OCI-LY7 (cell line): ENCODE measurements at regions of chr6 and their contacts with region 1.

Region 1: GRCh38 chr6:142827369-142827768 is 117.6 kb downstream of the HIVEP2 start:
- DNase-seq: no peak
- H3K4me3 ChIP-seq: no peak overlapping the region
- H3K27ac ChIP-seq: no peak overlapping the region
- H3K4me1 ChIP-seq: no peaks in the 10 kb centered on the region
- CTCF ChIP-seq: no peak

Region 2: DNA sequence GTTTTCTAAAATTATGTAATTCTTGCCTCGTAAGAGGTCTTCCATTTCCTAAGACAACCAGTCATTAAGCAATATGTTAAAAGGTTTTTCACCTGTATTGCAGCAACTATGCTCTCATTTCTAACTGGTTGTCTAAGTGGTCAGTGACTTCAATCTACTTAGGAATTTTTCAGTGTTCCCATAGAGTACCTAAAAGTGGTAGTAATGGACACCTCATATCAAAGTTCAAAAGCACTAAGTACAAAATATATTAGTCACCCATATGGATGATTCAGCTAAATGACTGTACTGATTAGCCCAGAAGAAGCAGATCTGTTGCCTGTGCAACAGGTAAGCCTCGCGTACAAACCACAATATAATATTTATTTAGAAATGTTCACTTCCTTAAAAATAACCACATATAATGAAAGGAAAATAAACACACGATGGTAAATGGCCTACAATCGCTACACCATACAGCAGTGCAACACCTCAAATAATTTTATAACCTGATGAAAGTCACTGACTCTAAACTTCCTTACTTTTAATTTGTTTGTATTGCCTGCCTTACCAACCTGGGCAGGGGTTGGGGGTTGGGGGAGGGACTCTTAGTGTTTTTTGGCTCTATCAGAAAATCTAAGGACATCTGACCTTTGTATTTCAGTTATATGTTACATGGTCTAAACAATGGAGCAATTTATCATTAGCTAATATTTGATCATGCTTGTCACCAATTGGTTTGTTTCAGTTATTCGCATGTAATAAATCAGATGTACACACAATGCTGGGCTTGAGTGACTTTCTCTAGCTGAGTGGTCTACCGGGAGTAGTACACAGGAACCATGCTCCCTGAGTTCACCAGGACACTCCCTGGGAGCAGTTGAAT is 11.7 kb after region 1 on chr6:
- CTCF ChIA-PET with region 1: interaction called, 4 read pairs
- POLR2A ChIA-PET with region 1: interaction called, 32 read pairs
- intact Hi-C with region 1: no loop called
- DNase-seq: no peak
- H3K4me3 ChIP-seq: no peak overlapping the region
- H3K27ac ChIP-seq: no peak overlapping the region
- H3K4me1 ChIP-seq: peaks cover 43% of the 10 kb centered on the region
- CTCF ChIP-seq: no peak